ENCODE measurements at regions of chr19 and their contacts with region 1.

Region 1: DNA sequence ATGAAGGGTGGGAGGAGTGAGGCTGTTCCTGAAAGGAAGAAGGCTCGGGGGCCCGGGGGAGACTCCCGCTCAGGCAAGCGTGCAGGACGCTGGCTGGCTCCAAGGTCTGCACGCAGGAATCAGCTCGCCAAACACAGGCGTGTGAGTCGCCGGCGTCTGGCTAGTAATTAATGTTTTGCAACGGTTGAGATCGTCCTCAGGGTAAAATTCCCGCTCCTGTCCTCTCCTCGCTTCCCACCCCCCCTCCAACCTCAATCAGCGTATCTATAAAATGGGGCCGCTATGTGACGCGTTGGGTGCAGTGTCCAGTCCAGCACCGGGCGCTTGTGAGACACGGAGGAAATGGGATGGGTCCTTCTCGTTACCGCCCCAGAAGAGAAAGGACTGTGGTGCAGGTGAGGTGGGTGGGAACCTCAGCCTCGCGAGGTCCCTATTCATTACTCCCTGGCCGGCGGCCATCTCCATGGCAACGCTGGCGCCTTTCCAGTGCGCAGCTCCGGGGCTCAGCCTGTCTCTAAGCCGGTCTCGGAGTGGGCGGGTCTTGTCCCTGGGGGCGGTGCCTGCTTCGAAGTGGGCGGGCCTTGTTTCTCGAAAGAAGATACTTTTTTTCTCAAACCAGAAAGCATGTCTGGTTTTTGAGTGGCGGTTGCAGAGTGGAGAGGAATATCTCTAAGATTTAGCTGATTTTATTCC is 6.5 kb upstream of the ZNF579 start:
- DNase-seq: peak; percentile 85
- ATAC-seq: peak; percentile 94
- H3K4me3 ChIP-seq: peak overlapping the region; percentile 23 to 28
- H3K27ac ChIP-seq: no peak overlapping the region; the same call in 1 of the 2 replicates
- H3K4me1 ChIP-seq: peaks cover 11 to 22% of the 10 kb centered on the region in 2 experiments
- H3K27me3 ChIP-seq: no peaks in the 10 kb centered on the region
- CTCF ChIP-seq: no peak
- POLR2A ChIP-seq: no peak
- RAD21 ChIP-seq: no peak

Region 2: GRCh38 chr19:55549500-55550320 is 37.4 kb before region 1 on chr19:
- CTCF ChIA-PET with region 1: no interaction called
- POLR2A ChIA-PET with region 1: no interaction called
- RAD21 ChIA-PET with region 1: no interaction called
- intact Hi-C with region 1: loop called (anchors 5 kb)
- DNase-seq: peak; percentile 34
- ATAC-seq: peak; percentile 68
- H3K4me3 ChIP-seq: peak overlapping the region; percentile 44 to 59
- H3K27ac ChIP-seq: peak overlapping the region; percentile 91
- H3K4me1 ChIP-seq: peaks cover 48 to 80% of the 10 kb centered on the region in 2 experiments
- H3K27me3 ChIP-seq: no peaks in the 10 kb centered on the region
- CTCF ChIP-seq: peak in 2 of 3 experiments; percentile 19 to 27; a peak in 3 of 6 replicates
- POLR2A ChIP-seq: no peak
- RAD21 ChIP-seq: no peak

Region 3: GRCh38 chr19:55576746-55577145 is 10.4 kb before region 1 on chr19:
- CTCF ChIA-PET with region 1: no interaction called
- POLR2A ChIA-PET with region 1: no interaction called
- RAD21 ChIA-PET with region 1: no interaction called
- intact Hi-C with region 1: no loop called
- DNase-seq: no peak
- ATAC-seq: no peak
- H3K4me3 ChIP-seq: no peak overlapping the region
- H3K27ac ChIP-seq: no peak overlapping the region
- H3K4me1 ChIP-seq: peaks cover 7 to 14% of the 10 kb centered on the region in 2 experiments; a peak in 3 of 4 replicates
- H3K27me3 ChIP-seq: no peaks in the 10 kb centered on the region
- CTCF ChIP-seq: no peak
- POLR2A ChIP-seq: no peak
- RAD21 ChIP-seq: no peak

Measured in HCT116 (cell line).